Lower lobe of right lung (tissue), 2 donors: ENCODE measurements at regions of chr3 and their contacts with region 1.

Region 1: GRCh38 chr3:58628823-58629562 is 37.6 kb downstream of the FAM3D start:
- DNase-seq: no peak
- ATAC-seq: peak in 1 of 2 donors; percentile 11
- H3K4me3 ChIP-seq: no peak overlapping the region
- H3K27ac ChIP-seq: peak overlapping the region; percentile 39
- H3K4me1 ChIP-seq: peaks cover 34% of the 10 kb centered on the region
- H3K27me3 ChIP-seq: no peaks in the 10 kb centered on the region
- CTCF ChIP-seq: no peak

Region 2: GRCh38 chr3:58577269-58577821 is 51.6 kb before region 1 on chr3 and contains the start of gene FAM107A:
- intact Hi-C with region 1: loop called (anchors 10 kb)
- DNase-seq: no peak
- ATAC-seq: peak; percentile 66 to 79
- H3K4me3 ChIP-seq: peak within 1 kb of the TSS; percentile 52
- H3K27ac ChIP-seq: peak within 1 kb of the TSS; percentile 88
- H3K4me1 ChIP-seq: no peaks in the 10 kb centered on the region
- H3K27me3 ChIP-seq: no peaks in the 10 kb centered on the region
- CTCF ChIP-seq: no peak
- total RNA-seq, gene FAM107A: 74.5 TPM